ENCODE measurements at regions of chr5 and their contacts with region 1.

Region 1: GRCh38 chr5:134041570-134042411 is 37.0 kb upstream of the VDAC1 start:
- DNase-seq: no peak
- H3K4me3 Mint-ChIP-seq: no peak overlapping the region
- H3K27ac Mint-ChIP-seq: peak overlapping the region; percentile 63
- H3K4me1 Mint-ChIP-seq: peaks cover 49% of the 10 kb centered on the region
- H3K27me3 Mint-ChIP-seq: peaks cover 21% of the 10 kb centered on the region

Region 2: GRCh38 chr5:134053840-134054338 is 12.1 kb after region 1 on chr5:
- CTCF ChIA-PET with region 1: interaction called, 50 read pairs
- DNase-seq: no peak
- H3K4me3 Mint-ChIP-seq: peak overlapping the region; percentile 7
- H3K27ac Mint-ChIP-seq: peak overlapping the region; percentile 80
- H3K4me1 Mint-ChIP-seq: peaks cover 37% of the 10 kb centered on the region
- H3K27me3 Mint-ChIP-seq: peaks cover 2% of the 10 kb centered on the region

Region 3: DNA sequence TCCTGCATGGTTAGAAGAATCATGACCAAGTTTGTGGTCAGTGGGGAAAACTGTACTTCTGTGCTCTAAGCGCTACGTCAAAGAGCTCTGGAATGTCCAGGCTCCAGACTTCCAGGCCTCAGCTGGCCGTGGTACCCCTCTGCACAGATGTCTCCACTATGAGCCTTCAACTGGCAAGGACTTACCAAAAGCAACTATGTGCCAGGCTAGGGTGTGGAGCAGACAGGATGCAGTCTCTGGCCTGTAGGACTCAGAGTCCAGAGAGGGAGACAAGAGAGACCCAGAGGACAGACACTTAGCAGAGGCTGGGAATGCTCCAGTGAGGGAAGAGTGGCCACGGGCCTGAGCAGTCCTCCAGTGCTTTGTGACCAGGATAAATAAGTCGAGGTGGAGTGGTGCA is 41.7 kb after region 1 on chr5:
- CTCF ChIA-PET with region 1: interaction called, 14 read pairs
- DNase-seq: no peak
- H3K4me3 Mint-ChIP-seq: no peak overlapping the region
- H3K27ac Mint-ChIP-seq: no peak overlapping the region
- H3K4me1 Mint-ChIP-seq: peaks cover 79% of the 10 kb centered on the region
- H3K27me3 Mint-ChIP-seq: peaks cover 4% of the 10 kb centered on the region

Region 4: GRCh38 chr5:134119720-134120119 is 77.9 kb after region 1 on chr5:
- CTCF ChIA-PET with region 1: interaction called, 21 read pairs
- DNase-seq: peak; percentile 58
- H3K4me3 Mint-ChIP-seq: peak overlapping the region; percentile 79
- H3K27ac Mint-ChIP-seq: peak overlapping the region; percentile 95
- H3K4me1 Mint-ChIP-seq: peaks cover 81% of the 10 kb centered on the region
- H3K27me3 Mint-ChIP-seq: peaks cover 18% of the 10 kb centered on the region

Region 5: GRCh38 chr5:134145779-134146581 is 104.2 kb after region 1 on chr5:
- CTCF ChIA-PET with region 1: interaction called, 743 read pairs
- DNase-seq: peak; percentile 90
- H3K4me3 Mint-ChIP-seq: no peak overlapping the region
- H3K27ac Mint-ChIP-seq: peak overlapping the region; percentile 71
- H3K4me1 Mint-ChIP-seq: peaks cover 38% of the 10 kb centered on the region
- H3K27me3 Mint-ChIP-seq: no peaks in the 10 kb centered on the region

Region 6: GRCh38 chr5:134184155-134185135 is 142.7 kb after region 1 on chr5:
- CTCF ChIA-PET with region 1: interaction called, 11 read pairs
- DNase-seq: peak; percentile 85
- H3K4me3 Mint-ChIP-seq: no peak overlapping the region
- H3K27ac Mint-ChIP-seq: no peak overlapping the region
- H3K4me1 Mint-ChIP-seq: no peaks in the 10 kb centered on the region
- H3K27me3 Mint-ChIP-seq: peaks cover 22% of the 10 kb centered on the region